AG04449 (cell line): ENCODE measurements at regions of chr11 and their contacts with region 1.

Region 1: GRCh38 chr11:6619004-6619745 is at the start of gene TPP1:
- DNase-seq: no peak
- H3K4me3 ChIP-seq: peak within 1 kb of the TSS; percentile 97
- CTCF ChIP-seq: no peak

Region 2: DNA sequence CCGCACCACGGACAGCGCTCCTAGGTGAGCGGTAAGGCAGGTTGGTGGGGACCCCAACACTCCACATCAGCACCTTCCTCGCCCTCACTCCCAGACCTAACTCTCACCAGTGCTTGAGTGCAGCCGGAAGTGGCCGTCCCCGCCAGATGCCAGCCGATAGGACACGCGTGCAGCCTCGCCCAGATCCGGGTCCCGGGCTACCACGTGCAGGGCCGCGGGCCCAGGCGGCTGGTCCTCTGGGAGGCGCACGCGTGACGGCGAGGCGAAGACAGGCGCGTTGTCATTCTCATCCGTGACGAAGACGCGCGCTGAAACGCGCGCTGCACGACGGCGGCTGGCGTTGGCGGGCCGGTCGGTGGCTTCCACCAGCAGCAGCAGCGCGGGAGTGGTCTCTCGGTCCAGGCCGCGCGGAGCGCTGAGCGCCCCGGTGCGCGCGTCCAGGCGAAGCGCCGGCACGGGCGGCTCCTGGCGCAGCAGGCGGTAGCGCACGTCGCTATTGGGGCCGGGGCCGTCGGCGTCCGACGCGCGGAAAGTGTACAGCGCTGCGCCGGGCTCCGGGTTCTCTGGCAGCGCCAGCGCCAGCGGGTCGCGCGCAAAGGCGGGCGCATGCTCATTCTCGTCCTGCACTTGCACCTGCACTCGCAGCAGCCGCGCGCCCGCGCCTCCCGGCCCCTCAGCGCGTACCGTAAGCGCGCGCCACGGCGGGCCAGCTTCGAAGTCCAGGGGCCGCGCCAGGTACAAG is 10.9 kb after region 1 on chr11:
- CTCF ChIA-PET with region 1: interaction called, 11 read pairs
- POLR2A ChIA-PET with region 1: interaction called, 4 read pairs
- DNase-seq: no peak
- H3K4me3 ChIP-seq: no peak overlapping the region
- CTCF ChIP-seq: no peak

Region 3: DNA sequence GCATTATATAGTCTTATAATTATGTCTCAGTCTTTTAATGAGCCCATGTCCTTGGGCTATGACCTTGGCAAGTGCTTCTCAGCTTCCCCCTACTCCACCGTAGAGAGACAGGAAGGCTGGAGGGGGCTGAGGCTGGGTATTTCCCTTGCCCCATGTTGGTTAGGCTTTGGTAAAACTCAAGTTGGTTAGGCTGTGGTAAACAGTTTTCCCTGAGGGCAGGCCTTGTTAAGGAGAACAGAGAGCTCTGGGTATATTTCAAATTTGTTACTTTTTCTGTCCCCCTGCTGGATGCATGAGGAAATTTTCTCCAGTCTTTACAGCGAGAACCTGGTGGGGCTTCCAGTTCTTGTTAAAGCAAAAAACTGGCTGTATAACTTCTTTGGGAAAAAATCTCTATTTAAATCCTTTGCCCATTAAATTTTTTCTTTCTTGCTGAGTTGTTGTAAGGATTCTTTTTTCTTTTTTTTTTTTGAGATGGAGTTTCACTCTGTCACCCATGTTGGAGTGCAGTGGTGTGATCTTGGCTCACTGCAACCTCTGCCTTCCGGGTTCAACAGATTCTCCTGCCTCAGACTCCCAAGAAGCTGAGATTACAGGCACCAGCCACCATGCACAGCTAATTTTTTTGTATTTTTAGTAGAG is 48.7 kb after region 1 on chr11:
- CTCF ChIA-PET with region 1: interaction called, 14 read pairs
- POLR2A ChIA-PET with region 1: no interaction called
- DNase-seq: no peak
- H3K4me3 ChIP-seq: no peak overlapping the region
- CTCF ChIP-seq: peak; percentile 29